ENCODE measurements at regions of chr19 and their contacts with region 1.

Region 1: GRCh38 chr19:2887391-2887914 is 13.3 kb upstream of the ZNF57 start:
- DNase-seq: no peak
- H3K4me3 ChIP-seq: no peak overlapping the region
- H3K27ac ChIP-seq: no peak overlapping the region
- H3K4me1 ChIP-seq: peaks cover 0 to 8% (median 0%) of the 10 kb centered on the region in 4 donors
- H3K27me3 ChIP-seq: no peaks in the 10 kb centered on the region
- CTCF ChIP-seq: peak; percentile 55 to 73 (median 68)
- EP300 ChIP-seq: no peak
- POLR2A ChIP-seq: no peak

Region 2: GRCh38 chr19:2282062-2282861 is 605.2 kb before region 1 on chr19 and contains the start of gene PEAK3:
- in situ Hi-C with region 1: no loop called
- intact Hi-C with region 1: loop called (anchors 2 kb)
- DNase-seq: peak; percentile 79
- H3K4me3 ChIP-seq: peak within 1 kb of the TSS in 3 of 4 donors; percentile 1 to 38 (median 26)
- H3K27ac ChIP-seq: peak within 1 kb of the TSS; percentile 22 to 56 (median 42)
- H3K4me1 ChIP-seq: peaks cover 0 to 23% (median 11%) of the 10 kb centered on the region in 4 donors
- H3K27me3 ChIP-seq: peaks cover 36% of the 10 kb centered on the region
- CTCF ChIP-seq: no peak
- EP300 ChIP-seq: no peak
- POLR2A ChIP-seq: no peak
- total RNA-seq, gene PEAK3: 0.27 to 1.1 (median 1.1) TPM in 3 of 4 donors, not detected in the other

Region 3: DNA sequence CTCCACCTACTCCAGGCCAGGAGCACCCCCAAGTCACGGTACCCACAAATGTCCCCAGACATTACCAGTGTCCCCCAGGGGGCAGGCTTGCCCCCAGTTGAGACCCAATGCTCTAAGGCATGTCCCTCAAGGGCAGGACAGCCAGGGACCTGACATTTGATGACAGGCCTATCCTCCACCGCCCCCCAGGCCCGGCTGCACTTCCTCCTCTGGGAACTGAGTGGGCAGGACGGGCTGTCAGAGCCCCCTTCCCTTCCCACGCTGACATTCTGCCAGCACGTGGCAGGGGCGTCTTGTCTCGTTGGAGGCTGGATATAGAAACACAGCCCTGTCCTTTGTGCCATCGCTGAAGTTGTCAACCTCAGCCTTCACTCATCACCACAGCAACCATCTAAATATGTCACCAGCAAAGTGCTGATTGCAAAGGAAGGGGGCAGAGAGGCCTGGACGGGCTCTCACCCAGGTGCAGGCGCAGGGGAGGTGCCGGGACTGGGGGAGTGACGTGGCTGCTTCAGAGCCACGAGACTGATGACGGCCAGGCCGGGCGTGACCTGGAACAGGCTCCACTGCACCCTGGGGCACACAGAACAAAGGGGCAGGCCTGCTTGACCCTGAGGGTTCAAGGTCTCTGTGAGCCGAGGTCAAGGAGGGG is 223.4 kb before region 1 on chr19:
- in situ Hi-C with region 1: loop called in 1 of 4 experiments (anchors 25 kb)
- intact Hi-C with region 1: no loop called
- DNase-seq: peak; percentile 80
- H3K4me3 ChIP-seq: no peak overlapping the region
- H3K27ac ChIP-seq: peak overlapping the region in 2 of 4 donors; percentile 31 to 68
- H3K4me1 ChIP-seq: no peaks in the 10 kb centered on the region
- H3K27me3 ChIP-seq: no peaks in the 10 kb centered on the region
- CTCF ChIP-seq: no peak
- EP300 ChIP-seq: no peak
- POLR2A ChIP-seq: no peak

Region 4: GRCh38 chr19:2827840-2828489 is 59.5 kb before region 1 on chr19:
- in situ Hi-C with region 1: no loop called
- intact Hi-C with region 1: no loop called
- DNase-seq: no peak
- H3K4me3 ChIP-seq: no peak overlapping the region
- H3K27ac ChIP-seq: no peak overlapping the region
- H3K4me1 ChIP-seq: no peaks in the 10 kb centered on the region
- H3K27me3 ChIP-seq: no peaks in the 10 kb centered on the region
- CTCF ChIP-seq: no peak
- EP300 ChIP-seq: no peak
- POLR2A ChIP-seq: no peak

Region 5: GRCh38 chr19:2944403-2944774 is 56.9 kb after region 1 on chr19:
- in situ Hi-C with region 1: no loop called
- intact Hi-C with region 1: no loop called
- DNase-seq: no peak
- H3K4me3 ChIP-seq: peak overlapping the region; percentile 80 to 94 (median 88)
- H3K27ac ChIP-seq: peak overlapping the region; percentile 92 to 95 (median 94)
- H3K4me1 ChIP-seq: peaks cover under 1 to 20% (median 18%) of the 10 kb centered on the region in 4 donors
- H3K27me3 ChIP-seq: no peaks in the 10 kb centered on the region
- CTCF ChIP-seq: no peak
- EP300 ChIP-seq: no peak
- POLR2A ChIP-seq: no peak